Activated T-helper 1 cell treated with anti-CD3 and anti-CD28 coated beads, Interleukin-12 subunit alpha, Interleukin-12 subunit beta, Interleukin-2, Interleukin-4 antibody, amounts not matched to agents 30 ng/mL and 10 ng/mL and 1 ng/mL, durations not matched to agents 14 hours and 24 hours and 36 hours (primary cell): ENCODE measurements at regions of chr2 and their contacts with region 1.

Region 1: DNA sequence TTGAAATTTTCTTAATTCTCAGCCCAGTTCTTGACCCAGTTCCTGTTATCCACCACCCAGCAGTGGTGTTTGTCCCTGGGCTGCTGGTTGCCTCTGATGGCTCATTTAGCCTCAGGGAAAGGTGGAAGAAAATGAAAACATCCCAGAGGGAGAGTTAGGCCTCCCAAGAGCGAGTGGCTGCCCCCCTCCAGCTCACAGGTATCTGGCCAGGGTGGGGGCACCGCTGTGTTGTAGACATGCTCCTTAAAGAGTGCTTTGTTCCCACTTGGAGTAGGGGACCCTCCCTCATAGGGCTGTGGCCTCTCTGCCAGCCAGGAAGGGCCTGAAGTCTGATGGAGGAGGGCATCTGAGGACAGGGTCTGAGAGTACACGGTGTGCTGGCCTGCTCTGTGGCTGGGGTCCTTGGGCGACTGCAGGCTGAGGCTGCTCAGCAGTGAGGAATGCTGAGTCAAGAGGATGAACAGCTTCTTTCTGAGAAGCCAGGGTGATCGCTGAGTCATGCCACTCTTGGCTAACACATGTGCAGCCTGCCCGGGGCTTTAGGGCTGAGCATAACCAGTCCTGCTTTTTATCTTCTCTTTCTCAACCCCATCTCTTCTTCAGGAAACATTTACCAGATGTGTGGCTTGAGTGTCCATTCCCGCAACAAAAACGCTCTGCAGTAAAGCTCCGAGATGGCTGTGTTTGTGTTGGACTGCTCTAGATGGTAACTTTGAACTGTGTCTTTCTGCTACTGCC is 72.3 kb downstream of the IL1R2 start:
- DNase-seq: peak; percentile 17
- H3K4me3 Mint-ChIP-seq: no peak overlapping the region
- H3K27ac Mint-ChIP-seq: no peak overlapping the region
- H3K4me1 Mint-ChIP-seq: peaks cover 31% of the 10 kb centered on the region
- H3K27me3 Mint-ChIP-seq: peaks cover 7% of the 10 kb centered on the region

Region 2: GRCh38 chr2:102028470-102028869 is 35.6 kb before region 1 on chr2:
- intact Hi-C with region 1: loop called (anchors 1 kb)
- DNase-seq: no peak
- H3K4me3 Mint-ChIP-seq: no peak overlapping the region
- H3K27ac Mint-ChIP-seq: peak overlapping the region; percentile 40
- H3K4me1 Mint-ChIP-seq: peaks cover 57% of the 10 kb centered on the region
- H3K27me3 Mint-ChIP-seq: peaks cover 2% of the 10 kb centered on the region

Region 3: GRCh38 chr2:102103992-102104871 is 40.1 kb after region 1 on chr2:
- intact Hi-C with region 1: loop called (anchors 1 kb)
- DNase-seq: peak; percentile 22
- H3K4me3 Mint-ChIP-seq: peak overlapping the region; percentile 72
- H3K27ac Mint-ChIP-seq: peak overlapping the region; percentile 13
- H3K4me1 Mint-ChIP-seq: peaks cover 24% of the 10 kb centered on the region
- H3K27me3 Mint-ChIP-seq: peaks cover 17% of the 10 kb centered on the region

Region 4: GRCh38 chr2:102114290-102114721 is 50.2 kb after region 1 on chr2:
- intact Hi-C with region 1: loop called (anchors 1 kb)
- DNase-seq: no peak
- H3K4me3 Mint-ChIP-seq: no peak overlapping the region
- H3K27ac Mint-ChIP-seq: no peak overlapping the region
- H3K4me1 Mint-ChIP-seq: peaks cover 32% of the 10 kb centered on the region
- H3K27me3 Mint-ChIP-seq: peaks cover 15% of the 10 kb centered on the region

Region 5: GRCh38 chr2:102137138-102137537 is 73.0 kb after region 1 on chr2:
- intact Hi-C with region 1: loop called (anchors 1 kb)
- DNase-seq: no peak
- H3K4me3 Mint-ChIP-seq: no peak overlapping the region
- H3K27ac Mint-ChIP-seq: peak overlapping the region; percentile 15
- H3K4me1 Mint-ChIP-seq: peaks cover 33% of the 10 kb centered on the region
- H3K27me3 Mint-ChIP-seq: peaks cover 21% of the 10 kb centered on the region

Region 6: GRCh38 chr2:102235491-102235890 is 171.4 kb after region 1 on chr2:
- intact Hi-C with region 1: loop called (anchors 2 kb)
- DNase-seq: no peak
- H3K4me3 Mint-ChIP-seq: no peak overlapping the region
- H3K27ac Mint-ChIP-seq: no peak overlapping the region
- H3K4me1 Mint-ChIP-seq: peaks cover 53% of the 10 kb centered on the region
- H3K27me3 Mint-ChIP-seq: no peaks in the 10 kb centered on the region

Region 7: GRCh38 chr2:102282678-102283091 is 218.6 kb after region 1 on chr2:
- intact Hi-C with region 1: no loop called
- DNase-seq: no peak
- H3K4me3 Mint-ChIP-seq: no peak overlapping the region
- H3K27ac Mint-ChIP-seq: no peak overlapping the region
- H3K4me1 Mint-ChIP-seq: peaks cover 31% of the 10 kb centered on the region
- H3K27me3 Mint-ChIP-seq: no peaks in the 10 kb centered on the region